Endothelial cell of umbilical vein (primary cell): ENCODE measurements at regions of chr3 and their contacts with region 1.

Region 1: GRCh38 chr3:28328188-28329151 is 20.1 kb upstream of the ZCWPW2 start:
- DNase-seq: peak; percentile 48
- H3K4me3 ChIP-seq: no peak overlapping the region
- H3K27ac ChIP-seq: no peak overlapping the region
- H3K4me1 ChIP-seq: no peaks in the 10 kb centered on the region
- H3K27me3 ChIP-seq: no peaks in the 10 kb centered on the region
- CTCF ChIP-seq: peak; percentile 29 to 40
- POLR2A ChIP-seq: no peak

Region 2: GRCh38 chr3:27312044-27312668 is 1016.3 kb before region 1 on chr3:
- CTCF ChIA-PET with region 1: no interaction called
- POLR2A ChIA-PET with region 1: no interaction called
- dilution Hi-C with region 1: no loop called
- intact Hi-C with region 1: loop called (anchors 1 kb)
- DNase-seq: peak; percentile 79
- H3K4me3 ChIP-seq: no peak overlapping the region
- H3K27ac ChIP-seq: no peak overlapping the region
- H3K4me1 ChIP-seq: peaks cover 9% of the 10 kb centered on the region
- H3K27me3 ChIP-seq: no peaks in the 10 kb centered on the region
- CTCF ChIP-seq: peak; percentile 57 to 68
- POLR2A ChIP-seq: no peak

Region 3: DNA sequence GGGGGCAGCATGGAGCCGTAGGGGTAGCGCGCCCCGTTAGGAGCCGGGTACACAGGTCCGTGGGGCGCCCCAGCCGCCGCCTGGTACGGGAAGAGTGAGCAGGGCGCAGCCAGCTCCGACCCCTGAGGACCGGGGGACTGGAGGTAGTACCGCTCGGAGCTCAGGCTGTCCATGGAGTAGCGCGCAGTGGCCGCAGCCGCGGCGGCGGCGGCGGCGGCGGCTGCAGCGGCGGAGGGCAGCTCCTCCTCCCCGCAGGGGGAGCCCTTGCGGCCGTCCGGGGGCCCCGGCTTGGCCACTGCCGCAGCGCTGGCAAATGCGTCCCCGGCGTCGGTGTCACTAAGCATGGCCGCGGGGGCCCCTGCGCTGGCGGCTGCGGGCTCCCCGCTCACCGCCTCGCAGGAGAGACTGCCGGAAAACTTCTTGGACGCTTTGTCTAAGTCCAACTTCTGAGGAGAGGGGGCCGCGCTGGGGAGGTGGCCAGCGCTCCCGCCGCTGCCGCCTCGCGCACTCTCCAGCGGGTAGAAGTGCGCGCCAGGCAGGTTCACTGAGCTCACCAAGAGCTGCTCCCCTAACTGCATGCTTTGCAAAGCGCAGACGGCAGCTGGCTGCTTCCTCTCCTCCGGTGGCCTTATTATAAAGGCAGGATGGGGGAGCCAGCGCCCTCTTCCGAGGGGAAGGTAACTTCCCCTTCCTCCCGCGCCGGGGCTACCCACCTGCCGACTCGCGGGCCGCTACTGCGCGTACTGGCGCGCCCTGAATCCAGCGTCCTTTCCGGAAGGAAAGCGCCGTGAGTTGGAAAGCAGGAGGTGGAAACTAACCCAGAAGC is 606.5 kb before region 1 on chr3 and contains the start of gene EOMES:
- CTCF ChIA-PET with region 1: interaction called, 15 read pairs
- POLR2A ChIA-PET with region 1: no interaction called
- dilution Hi-C with region 1: no loop called
- intact Hi-C with region 1: no loop called
- DNase-seq: peak; percentile 29
- H3K4me3 ChIP-seq: peak within 1 kb of the TSS in 2 of 3 experiments; percentile 18 to 20
- H3K27ac ChIP-seq: no peak within 1 kb of the TSS
- H3K4me1 ChIP-seq: peaks cover 9% of the 10 kb centered on the region
- H3K27me3 ChIP-seq: peaks cover 79 to 99% of the 10 kb centered on the region in 2 experiments
- CTCF ChIP-seq: peak; percentile 3 to 36
- POLR2A ChIP-seq: no peak
- total RNA-seq, gene EOMES: not detected in 2 replicates

Region 4: GRCh38 chr3:28198161-28198560 is 130.3 kb before region 1 on chr3:
- CTCF ChIA-PET with region 1: no interaction called
- POLR2A ChIA-PET with region 1: no interaction called
- dilution Hi-C with region 1: no loop called
- intact Hi-C with region 1: no loop called
- DNase-seq: no peak
- H3K4me3 ChIP-seq: no peak overlapping the region
- H3K27ac ChIP-seq: no peak overlapping the region
- H3K4me1 ChIP-seq: no peaks in the 10 kb centered on the region
- H3K27me3 ChIP-seq: no peaks in the 10 kb centered on the region
- CTCF ChIP-seq: no peak
- POLR2A ChIP-seq: no peak

Region 5: GRCh38 chr3:28232659-28233058 is 95.8 kb before region 1 on chr3:
- CTCF ChIA-PET with region 1: no interaction called
- POLR2A ChIA-PET with region 1: no interaction called
- dilution Hi-C with region 1: no loop called
- intact Hi-C with region 1: no loop called
- DNase-seq: no peak
- H3K4me3 ChIP-seq: no peak overlapping the region
- H3K27ac ChIP-seq: no peak overlapping the region
- H3K4me1 ChIP-seq: no peaks in the 10 kb centered on the region
- H3K27me3 ChIP-seq: peaks cover 2 to 8% of the 10 kb centered on the region in 2 experiments
- CTCF ChIP-seq: no peak
- POLR2A ChIP-seq: no peak

Region 6: GRCh38 chr3:28317438-28318022 is 10.9 kb before region 1 on chr3:
- CTCF ChIA-PET with region 1: interaction called, 61 read pairs
- POLR2A ChIA-PET with region 1: no interaction called
- dilution Hi-C with region 1: no loop called
- intact Hi-C with region 1: no loop called
- DNase-seq: peak; percentile 47
- H3K4me3 ChIP-seq: no peak overlapping the region
- H3K27ac ChIP-seq: no peak overlapping the region
- H3K4me1 ChIP-seq: peaks cover 4% of the 10 kb centered on the region
- H3K27me3 ChIP-seq: no peaks in the 10 kb centered on the region
- CTCF ChIP-seq: peak; percentile 45 to 46
- POLR2A ChIP-seq: no peak

Region 7: DNA sequence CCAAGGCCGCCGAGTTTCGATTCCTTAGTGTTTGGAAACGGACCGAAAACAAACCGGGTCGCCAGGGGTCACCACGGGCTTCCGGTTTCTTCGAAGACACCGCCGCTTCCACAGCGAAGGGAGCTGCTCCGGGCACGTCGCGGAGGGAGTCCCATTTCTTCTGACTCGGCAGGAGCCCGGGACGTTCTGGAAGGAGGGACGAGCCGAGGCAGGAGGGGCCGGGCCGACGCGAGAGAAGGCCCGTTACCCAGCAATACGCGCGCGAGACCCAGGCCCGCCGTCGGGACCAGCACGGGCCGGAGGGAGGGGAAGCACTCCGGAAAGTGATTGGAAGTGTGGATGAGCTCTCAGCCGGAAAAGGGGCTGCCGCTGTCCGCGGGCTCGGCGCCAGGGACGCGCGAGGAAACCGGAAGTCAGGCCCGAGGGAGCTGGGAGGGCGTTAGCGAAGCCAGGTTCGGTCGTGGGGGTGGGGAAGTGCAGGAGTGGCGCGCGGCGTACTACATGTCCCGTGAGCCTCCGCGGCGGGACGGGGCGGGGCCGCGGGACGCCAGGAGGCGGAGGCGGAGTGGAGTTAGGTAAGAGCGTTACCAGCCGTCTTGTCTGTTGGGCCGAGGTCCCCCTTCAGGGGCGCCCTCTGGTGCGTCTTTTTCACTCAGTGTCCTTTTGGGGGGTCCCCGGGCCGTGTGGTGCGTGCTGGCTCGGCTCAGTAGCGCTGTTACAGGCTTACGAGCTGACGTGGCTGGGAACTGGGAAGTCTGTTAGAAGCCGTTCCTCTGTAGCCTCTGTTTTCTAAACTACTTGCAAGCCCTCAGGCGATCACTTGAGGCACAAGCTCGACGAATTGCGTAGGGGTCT is 20.4 kb after region 1 on chr3 and contains the starts of genes AZI2 and ZCWPW2:
- CTCF ChIA-PET with region 1: interaction called, 41 read pairs
- POLR2A ChIA-PET with region 1: no interaction called
- dilution Hi-C with region 1: no loop called
- intact Hi-C with region 1: no loop called
- DNase-seq: peak; percentile 95
- H3K4me3 ChIP-seq: peak within 1 kb of the TSS; percentile 59 to 86 (median 69)
- H3K27ac ChIP-seq: peak within 1 kb of the TSS; percentile 98
- H3K4me1 ChIP-seq: peaks cover 16% of the 10 kb centered on the region
- H3K27me3 ChIP-seq: no peaks in the 10 kb centered on the region
- CTCF ChIP-seq: peak in 1 of 2 donors; percentile 21
- POLR2A ChIP-seq: no peak
- total RNA-seq, gene AZI2: 39.5 and 50.0 TPM in 2 replicates
- total RNA-seq, gene ZCWPW2: 0.40 TPM in 1 of 2 replicates, not detected in the other